Dorsolateral prefrontal cortex (tissue), 120 donors: ENCODE measurements at regions of chr3 and their contacts with region 1.

Region 1: GRCh38 chr3:38521391-38521987 is 25.3 kb downstream of the EXOG start:
- DNase-seq: peak in 6 of 10 donors; percentile 59 to 84 (median 70)
- H3K4me3 ChIP-seq: no peak overlapping the region
- H3K27ac ChIP-seq: no peak overlapping the region
- H3K27me3 ChIP-seq: no peaks in the 10 kb centered on the region
- CTCF ChIP-seq: peak; percentile 87 to 99 (median 95)

Region 2: DNA sequence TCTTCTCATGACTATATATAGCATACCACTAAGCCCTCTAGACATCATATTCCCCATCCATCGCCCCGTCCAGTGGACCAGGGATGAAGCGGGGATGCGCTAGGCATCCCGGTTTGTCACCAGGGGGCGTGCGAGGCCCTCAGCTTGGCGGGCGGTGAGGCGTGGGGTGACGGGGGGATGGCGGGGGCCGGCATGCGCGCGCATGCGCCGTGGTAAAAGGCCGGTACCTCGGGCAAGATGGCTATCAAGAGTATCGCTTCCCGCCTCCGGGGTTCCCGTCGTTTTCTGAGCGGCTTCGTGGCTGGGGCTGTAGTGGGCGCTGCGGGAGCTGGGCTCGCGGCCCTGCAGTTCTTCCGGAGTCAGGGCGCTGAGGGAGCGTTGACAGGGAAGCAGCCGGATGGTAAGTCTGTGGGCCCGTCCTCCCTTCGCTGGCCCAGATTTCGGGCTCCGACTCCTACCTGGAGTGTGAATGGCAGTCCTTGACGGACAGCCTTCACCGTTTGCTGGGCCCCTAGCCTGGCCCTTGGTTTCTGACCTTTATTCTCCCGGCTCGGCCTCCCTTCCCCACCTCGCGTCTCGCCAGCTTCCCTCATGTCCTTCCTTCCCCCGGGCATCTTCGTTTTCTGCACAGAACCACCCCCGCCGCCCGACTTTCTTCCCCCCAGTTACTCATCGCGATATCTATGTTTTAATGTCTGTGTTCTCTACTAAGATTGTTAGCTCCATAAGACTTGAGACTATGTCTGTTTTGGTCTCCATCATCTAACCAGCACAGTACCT is 25.2 kb before region 1 on chr3 and contains the start of gene EXOG:
- intact Hi-C with region 1: loop called in 1 of 2 experiments (anchors 1 kb)
- DNase-seq: peak; percentile 85 to 96 (median 92)
- H3K4me3 ChIP-seq: peak within 1 kb of the TSS; percentile 59 to 96 (median 83)
- H3K27ac ChIP-seq: peak within 1 kb of the TSS in 54 of 59 donors; percentile 16 to 93 (median 81)
- H3K27me3 ChIP-seq: no peaks in the 10 kb centered on the region
- CTCF ChIP-seq: peak; percentile 83 to 99 (median 95)
- total RNA-seq, gene EXOG: 19.0 to 38.1 (median 27.2) TPM

Region 3: DNA sequence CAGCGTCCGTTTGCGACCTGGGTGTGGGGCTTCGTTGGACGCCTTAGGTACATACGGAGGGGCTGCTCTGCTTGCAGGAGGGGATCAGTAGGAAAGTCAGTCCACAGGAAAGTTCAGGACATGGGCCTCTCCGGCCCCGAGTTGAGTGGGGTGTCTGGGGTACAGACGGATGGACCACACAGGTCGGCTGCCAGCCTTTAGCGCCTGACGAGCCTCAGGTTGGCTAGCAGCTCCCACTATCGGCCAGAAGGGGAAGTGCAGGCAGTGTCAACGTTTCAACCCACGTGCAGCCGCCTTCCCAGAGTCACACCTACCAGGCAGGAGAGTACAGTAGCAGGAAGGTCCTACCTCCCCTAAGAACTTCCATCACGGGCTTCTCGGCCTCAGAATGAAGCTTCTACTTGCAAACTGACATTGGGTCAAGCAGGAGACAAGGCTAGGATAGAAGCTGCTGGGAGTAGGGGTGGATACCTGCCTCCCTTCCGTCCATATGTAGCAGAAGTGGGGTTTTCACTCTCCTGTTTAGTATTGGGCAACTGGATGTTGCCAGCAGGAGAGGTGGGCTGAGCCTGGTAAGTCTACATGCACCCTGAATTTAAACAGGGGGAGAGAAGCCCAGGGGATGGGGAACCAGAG is 129.8 kb after region 1 on chr3:
- intact Hi-C with region 1: loop called (anchors 1 to 5 kb)
- DNase-seq: peak in 7 of 10 donors; percentile 28 to 73 (median 47)
- H3K4me3 ChIP-seq: peak overlapping the region in 10 of 59 donors; percentile 9 to 46 (median 20)
- H3K27ac ChIP-seq: no peak overlapping the region
- H3K27me3 ChIP-seq: peaks cover 0 to 61% (median 26%) of the 10 kb centered on the region in 45 donors
- CTCF ChIP-seq: peak; percentile 51 to 96 (median 90)

Region 4: GRCh38 chr3:38843898-38844297 is 322.4 kb after region 1 on chr3:
- intact Hi-C with region 1: loop called in 1 of 2 experiments (anchors 10 kb)
- DNase-seq: peak in 1 of 10 donors; percentile 5
- H3K4me3 ChIP-seq: no peak overlapping the region
- H3K27ac ChIP-seq: no peak overlapping the region
- H3K27me3 ChIP-seq: peaks cover 0 to 16% (median 0%) of the 10 kb centered on the region in 45 donors
- CTCF ChIP-seq: peak in 48 of 56 donors; percentile 14 to 61 (median 38)

Region 5: DNA sequence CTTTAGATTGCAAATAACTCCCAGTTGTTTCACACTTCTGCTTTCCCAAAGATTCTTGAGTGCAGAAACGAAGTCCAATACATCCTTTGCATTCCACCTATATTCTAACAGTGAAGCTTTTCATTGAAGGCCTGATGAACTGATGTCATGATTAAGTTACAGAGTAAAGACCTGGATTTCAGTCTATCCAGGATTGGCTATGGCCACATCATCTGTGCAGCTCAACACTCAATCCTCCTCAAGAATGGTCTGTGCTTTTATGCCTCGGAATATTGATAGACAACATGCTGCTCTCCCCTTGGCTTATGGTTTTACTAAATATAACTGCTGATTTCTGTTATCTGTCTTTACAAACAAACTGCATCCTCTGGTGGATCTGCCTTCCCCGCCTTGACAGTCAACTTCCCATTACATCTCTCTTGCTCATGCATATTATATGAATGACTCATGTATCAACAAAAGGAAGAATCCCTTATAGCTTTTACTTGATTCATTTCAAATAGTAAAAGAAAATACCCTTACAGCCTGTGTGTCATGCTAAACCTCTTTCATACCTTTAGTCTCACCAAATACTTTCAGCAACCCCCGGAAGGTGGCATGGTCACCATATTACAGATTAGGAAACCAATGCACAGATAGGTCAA is 470.8 kb after region 1 on chr3:
- intact Hi-C with region 1: loop called (anchors 10 kb)
- DNase-seq: no peak
- H3K4me3 ChIP-seq: no peak overlapping the region
- H3K27ac ChIP-seq: no peak overlapping the region
- H3K27me3 ChIP-seq: peaks cover 0 to 9% (median 0%) of the 10 kb centered on the region in 45 donors
- CTCF ChIP-seq: no peak